Transverse colon (tissue), 4 donors: ENCODE measurements at regions of chr3 and their contacts with region 1.

Region 1: DNA sequence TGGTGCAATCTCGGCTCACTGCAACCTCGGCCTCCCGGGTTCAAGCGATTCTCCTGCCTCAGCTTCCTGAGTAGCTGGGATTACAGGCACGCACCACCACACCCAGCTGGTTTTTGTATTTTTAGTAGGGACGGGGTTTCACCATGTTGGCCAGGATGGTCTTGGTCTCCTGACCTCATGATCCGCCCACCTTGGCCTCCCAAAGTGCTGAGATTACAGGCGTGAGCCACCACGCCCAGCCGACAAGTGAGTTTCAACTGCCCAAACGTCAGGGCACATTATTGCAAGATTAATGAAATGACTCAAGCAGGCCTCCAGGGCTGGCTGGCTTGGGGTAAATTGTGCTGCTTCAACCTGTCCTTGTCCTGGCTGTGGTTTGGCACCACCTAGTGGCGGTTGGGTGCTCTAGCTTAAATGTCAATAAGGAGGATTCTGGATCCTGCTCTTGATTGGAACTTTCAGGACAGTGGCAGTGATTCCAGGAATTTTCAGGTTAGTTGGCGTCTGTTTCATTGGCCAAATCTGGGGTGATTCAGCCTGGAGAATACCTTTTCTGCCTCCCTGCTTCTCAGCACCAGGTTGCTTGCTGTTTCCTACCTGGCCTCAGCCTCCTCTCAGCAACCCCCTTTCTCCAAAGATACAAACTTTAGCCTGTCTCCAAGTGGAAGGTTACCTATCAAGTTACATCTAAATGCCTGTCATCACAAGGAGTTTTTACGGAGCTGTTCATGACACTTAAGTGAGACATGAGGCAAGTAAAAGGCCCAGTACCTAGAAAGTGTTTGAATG is 32.4 kb upstream of the SACM1L start:
- DNase-seq: peak; percentile 93
- H3K4me3 ChIP-seq: no peak overlapping the region
- H3K27ac ChIP-seq: peak overlapping the region in 1 of 4 donors; percentile 59
- H3K4me1 ChIP-seq: peaks cover 4 to 23% (median 11%) of the 10 kb centered on the region in 4 donors
- H3K27me3 ChIP-seq: no peaks in the 10 kb centered on the region
- CTCF ChIP-seq: peak; percentile 92 to 98 (median 96)
- EP300 ChIP-seq: no peak
- POLR2A ChIP-seq: no peak

Region 2: DNA sequence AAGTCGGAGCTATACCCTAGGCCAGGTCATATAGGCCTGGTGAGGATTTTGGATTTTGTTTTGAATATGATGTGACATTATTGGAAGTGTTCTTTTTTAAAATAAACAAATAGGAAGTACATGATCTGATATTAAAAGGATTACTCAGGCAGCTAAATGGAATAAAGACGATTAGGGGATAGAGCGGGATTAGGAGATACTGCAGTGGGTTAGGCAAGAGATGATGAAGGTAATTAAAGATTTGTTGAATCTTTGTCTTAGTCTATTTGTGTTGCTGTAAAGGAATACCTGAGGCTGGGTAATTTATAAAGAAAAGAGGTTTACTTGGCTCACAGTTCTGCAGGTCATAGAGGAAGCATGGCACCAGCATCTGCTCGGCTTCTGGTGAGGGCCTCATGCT is 873.9 kb before region 1 on chr3:
- in situ Hi-C with region 1: no loop called
- intact Hi-C with region 1: no loop called
- DNase-seq: no peak
- H3K4me3 ChIP-seq: no peak overlapping the region
- H3K27ac ChIP-seq: no peak overlapping the region
- H3K4me1 ChIP-seq: no peaks in the 10 kb centered on the region
- H3K27me3 ChIP-seq: no peaks in the 10 kb centered on the region
- CTCF ChIP-seq: no peak
- EP300 ChIP-seq: no peak
- POLR2A ChIP-seq: no peak

Region 3: DNA sequence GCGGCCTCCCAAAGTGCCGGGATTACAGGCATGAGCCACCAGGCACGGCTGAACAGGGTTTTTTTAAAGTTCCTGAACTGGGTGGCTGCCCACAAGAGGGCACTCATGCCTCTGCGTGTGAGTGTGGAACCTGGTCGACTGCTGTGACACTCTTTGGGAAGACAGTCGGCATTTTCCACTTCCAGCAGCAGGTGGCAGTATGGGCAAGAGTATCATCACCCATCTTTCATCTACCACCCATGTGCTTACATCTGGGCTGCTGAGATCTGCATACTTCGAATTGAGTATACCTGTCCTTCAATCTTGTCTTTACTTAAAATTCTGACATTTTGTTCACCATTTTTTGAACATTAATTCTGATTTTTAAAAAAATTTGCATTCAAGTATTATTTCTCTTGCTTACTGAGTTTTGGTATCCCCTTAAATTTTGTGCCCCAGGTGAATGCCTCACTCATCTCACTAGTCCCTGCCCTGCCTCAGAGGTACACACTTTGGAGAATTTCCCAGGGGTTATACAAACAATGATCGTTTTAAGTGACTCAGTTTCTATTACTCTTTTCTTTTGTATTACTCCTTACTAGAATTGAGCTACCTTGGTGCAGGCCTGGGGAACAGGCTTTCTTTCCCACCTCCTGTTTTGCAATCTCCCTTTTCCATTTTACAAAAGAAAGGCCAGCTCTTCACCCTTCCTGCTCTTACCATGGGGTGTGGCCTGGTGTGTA is 618.9 kb before region 1 on chr3:
- in situ Hi-C with region 1: loop called (anchors 25 kb)
- intact Hi-C with region 1: no loop called
- DNase-seq: peak; percentile 95
- H3K4me3 ChIP-seq: peak overlapping the region in 1 of 4 donors; percentile 13
- H3K27ac ChIP-seq: peak overlapping the region in 1 of 4 donors; percentile 33
- H3K4me1 ChIP-seq: peaks cover 14 to 39% (median 25%) of the 10 kb centered on the region in 4 donors
- H3K27me3 ChIP-seq: no peaks in the 10 kb centered on the region
- CTCF ChIP-seq: peak; percentile 87 to 99 (median 91)
- EP300 ChIP-seq: no peak
- POLR2A ChIP-seq: no peak

Region 4: GRCh38 chr3:45224824-45225464 is 431.8 kb before region 1 on chr3:
- in situ Hi-C with region 1: loop called in 3 of 4 experiments (anchors 25 kb)
- intact Hi-C with region 1: no loop called
- DNase-seq: peak; percentile 74
- H3K4me3 ChIP-seq: peak overlapping the region; percentile 23 to 70 (median 61)
- H3K27ac ChIP-seq: peak overlapping the region in 3 of 4 donors; percentile 7 to 38 (median 7)
- H3K4me1 ChIP-seq: peaks cover 0 to 17% (median 9%) of the 10 kb centered on the region in 4 donors
- H3K27me3 ChIP-seq: peaks cover 60% of the 10 kb centered on the region
- CTCF ChIP-seq: peak; percentile 24 to 39 (median 32)
- EP300 ChIP-seq: no peak
- POLR2A ChIP-seq: no peak

Region 5: GRCh38 chr3:45507820-45508317 is 148.9 kb before region 1 on chr3:
- in situ Hi-C with region 1: loop called in 3 of 4 experiments (anchors 5 to 10 kb)
- intact Hi-C with region 1: loop called (anchors 2 kb)
- DNase-seq: no peak
- H3K4me3 ChIP-seq: no peak overlapping the region
- H3K27ac ChIP-seq: peak overlapping the region in 3 of 4 donors; percentile 35 to 48 (median 40)
- H3K4me1 ChIP-seq: no peaks in the 10 kb centered on the region
- H3K27me3 ChIP-seq: no peaks in the 10 kb centered on the region
- CTCF ChIP-seq: no peak
- EP300 ChIP-seq: no peak
- POLR2A ChIP-seq: no peak

Region 6: DNA sequence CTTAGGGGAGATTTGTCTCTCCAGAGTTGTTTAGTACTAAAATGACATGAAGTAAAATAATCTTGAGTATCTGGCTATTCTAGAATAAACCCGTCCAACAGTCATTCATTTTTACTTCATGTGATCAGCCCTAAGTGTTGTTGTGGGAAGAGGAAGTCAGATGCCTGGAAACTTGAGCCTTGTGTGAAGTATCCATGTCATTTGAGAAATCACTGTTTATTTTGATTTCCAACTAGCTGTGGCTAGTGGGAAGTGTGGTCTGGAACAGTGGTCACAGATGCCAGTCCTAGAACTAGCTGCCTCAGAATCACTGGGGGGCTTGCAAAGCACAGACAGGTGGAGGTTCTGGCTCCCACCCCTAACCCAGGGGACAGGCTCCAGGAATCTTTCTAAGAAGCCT is 139.9 kb before region 1 on chr3:
- in situ Hi-C with region 1: loop called in 3 of 4 experiments (anchors 5 to 10 kb)
- intact Hi-C with region 1: loop called (anchors 2 kb)
- DNase-seq: no peak
- H3K4me3 ChIP-seq: no peak overlapping the region
- H3K27ac ChIP-seq: no peak overlapping the region
- H3K4me1 ChIP-seq: no peaks in the 10 kb centered on the region
- H3K27me3 ChIP-seq: no peaks in the 10 kb centered on the region
- CTCF ChIP-seq: no peak
- EP300 ChIP-seq: no peak
- POLR2A ChIP-seq: no peak

Region 7: GRCh38 chr3:45593708-45594609 is 62.8 kb before region 1 on chr3:
- in situ Hi-C with region 1: loop called in 3 of 4 experiments (anchors 5 to 10 kb)
- intact Hi-C with region 1: loop called (anchors 2 kb)
- DNase-seq: peak; percentile 81
- H3K4me3 ChIP-seq: peak overlapping the region; percentile 54 to 83 (median 80)
- H3K27ac ChIP-seq: peak overlapping the region; percentile 93 to 97 (median 96)
- H3K4me1 ChIP-seq: peaks cover 30 to 58% (median 52%) of the 10 kb centered on the region in 4 donors
- H3K27me3 ChIP-seq: no peaks in the 10 kb centered on the region
- CTCF ChIP-seq: no peak
- EP300 ChIP-seq: no peak
- POLR2A ChIP-seq: peak; percentile 48

Region 8: GRCh38 chr3:45807681-45808540 is 151.1 kb after region 1 on chr3:
- in situ Hi-C with region 1: no loop called
- intact Hi-C with region 1: no loop called
- DNase-seq: no peak
- H3K4me3 ChIP-seq: no peak overlapping the region
- H3K27ac ChIP-seq: no peak overlapping the region
- H3K4me1 ChIP-seq: no peaks in the 10 kb centered on the region
- H3K27me3 ChIP-seq: no peaks in the 10 kb centered on the region
- CTCF ChIP-seq: no peak
- EP300 ChIP-seq: no peak
- POLR2A ChIP-seq: no peak